OCI-LY7 (cell line): ENCODE measurements at regions of chr20 and their contacts with region 1.

Region 1: DNA sequence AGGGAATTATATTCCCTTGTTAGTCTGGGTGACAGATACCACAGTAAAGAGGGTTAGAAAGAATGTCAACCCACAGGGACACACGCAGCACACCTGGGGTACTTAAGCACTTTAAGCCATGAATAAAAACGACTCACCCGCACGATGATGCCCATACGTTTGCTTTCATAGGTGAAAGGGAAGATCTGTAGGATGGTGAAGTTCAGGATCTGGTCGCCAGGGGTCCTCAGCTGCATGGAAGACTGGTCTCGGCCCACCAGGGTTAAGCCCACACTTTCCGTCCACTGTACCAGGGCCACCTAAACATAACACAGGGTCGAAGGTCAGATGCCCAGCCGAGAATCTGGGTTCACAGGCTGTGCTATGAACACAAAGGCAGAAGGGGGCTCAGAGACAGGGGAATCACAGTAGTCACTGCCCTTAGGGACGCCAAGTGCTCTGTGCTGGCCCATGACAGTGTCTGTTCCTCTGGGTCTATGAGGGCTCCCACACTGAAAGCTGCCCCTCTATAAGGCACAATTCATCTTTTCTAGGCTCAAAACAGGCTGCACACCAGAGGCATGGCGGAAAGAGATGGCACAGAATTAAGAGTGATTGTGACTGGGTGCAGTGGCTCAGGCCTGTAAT is 96.8 kb upstream of the NFATC2 start:
- DNase-seq: peak; percentile 79
- H3K4me3 ChIP-seq: no peak overlapping the region
- H3K27ac ChIP-seq: no peak overlapping the region
- H3K4me1 ChIP-seq: peaks cover 7% of the 10 kb centered on the region
- CTCF ChIP-seq: peak; percentile 92

Region 2: GRCh38 chr20:51695574-51696303 is 56.4 kb after region 1 on chr20:
- CTCF ChIA-PET with region 1: no interaction called
- POLR2A ChIA-PET with region 1: no interaction called
- intact Hi-C with region 1: loop called (anchors 2 kb)
- DNase-seq: no peak
- H3K4me3 ChIP-seq: peak overlapping the region; percentile 53
- H3K27ac ChIP-seq: peak overlapping the region; percentile 1
- H3K4me1 ChIP-seq: peaks cover 30% of the 10 kb centered on the region
- CTCF ChIP-seq: no peak

Region 3: DNA sequence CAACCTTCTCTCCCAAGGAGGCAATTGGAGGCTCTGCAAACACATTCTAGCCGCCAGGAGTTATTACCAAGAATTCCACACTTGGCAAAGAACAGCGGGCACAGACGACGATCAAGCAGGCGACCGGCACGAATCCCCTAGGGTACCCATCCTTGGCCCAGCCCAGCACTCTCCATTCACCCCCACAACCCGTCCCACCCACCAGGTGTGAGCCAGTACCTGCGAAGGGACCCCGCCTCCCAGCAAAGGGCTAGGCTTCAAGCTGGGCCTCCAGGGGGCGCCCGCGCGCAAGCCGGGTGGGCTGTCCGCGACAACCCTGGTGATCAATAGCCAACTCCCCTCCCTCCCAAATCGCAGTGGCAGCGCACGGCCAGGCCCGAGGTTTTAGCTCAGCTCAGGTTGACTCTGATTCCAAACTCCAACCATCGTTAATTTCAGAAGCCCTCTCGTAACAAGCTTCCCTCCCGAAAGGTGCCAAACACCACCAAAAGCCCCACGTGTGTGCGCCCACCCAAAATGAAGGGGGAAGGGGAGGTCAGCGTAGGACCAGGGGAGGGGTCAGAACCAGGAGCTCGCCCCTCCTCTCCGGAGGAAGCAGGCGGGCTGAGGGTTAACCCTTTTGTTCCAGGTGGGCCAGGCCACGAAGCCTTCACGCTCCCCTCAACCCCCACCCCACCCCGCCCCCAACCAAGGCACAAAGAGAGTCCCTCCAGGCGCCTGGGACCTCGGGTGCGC is 160.9 kb after region 1 on chr20:
- CTCF ChIA-PET with region 1: no interaction called
- POLR2A ChIA-PET with region 1: interaction called, 3 read pairs
- intact Hi-C with region 1: loop called (anchors 2 kb)
- DNase-seq: peak; percentile 45
- H3K4me3 ChIP-seq: no peak overlapping the region
- H3K27ac ChIP-seq: no peak overlapping the region
- H3K4me1 ChIP-seq: no peaks in the 10 kb centered on the region
- CTCF ChIP-seq: peak; percentile 94

Region 4: DNA sequence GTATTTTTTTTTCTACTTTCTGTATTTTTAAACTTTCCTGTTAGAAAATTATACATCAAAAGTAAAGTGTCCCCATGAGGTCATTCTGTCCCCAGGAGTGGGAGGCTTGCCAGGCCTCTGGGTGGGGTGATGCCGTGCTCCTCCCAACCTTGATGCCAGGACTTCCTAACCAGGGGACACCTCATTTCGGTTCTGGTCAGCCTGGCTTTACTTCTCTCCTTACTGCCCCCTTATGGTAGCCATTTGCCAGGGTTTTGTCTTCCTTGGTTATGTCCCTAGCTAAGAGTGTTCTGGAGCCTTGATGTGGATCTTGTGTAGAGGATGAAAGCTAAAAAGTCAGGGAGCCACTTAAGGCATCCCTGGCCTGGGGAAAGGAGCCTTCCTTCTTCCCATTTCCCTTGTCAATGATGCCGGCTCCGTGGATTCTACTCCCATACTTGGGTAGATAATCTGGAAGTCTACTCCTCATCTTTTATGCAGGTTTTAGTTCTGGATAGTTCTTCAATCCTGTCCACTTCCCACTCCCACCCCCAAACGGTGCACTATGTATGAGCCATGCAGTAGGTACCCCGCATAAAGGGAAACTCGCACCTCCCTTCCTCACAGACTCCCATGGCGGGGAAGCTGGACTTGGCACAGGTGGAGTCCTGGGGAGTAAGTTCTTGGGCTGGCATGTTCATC is 327.1 kb after region 1 on chr20:
- CTCF ChIA-PET with region 1: no interaction called
- POLR2A ChIA-PET with region 1: no interaction called
- intact Hi-C with region 1: loop called (anchors 1 kb)
- DNase-seq: peak; percentile 55
- H3K4me3 ChIP-seq: no peak overlapping the region
- H3K27ac ChIP-seq: no peak overlapping the region
- H3K4me1 ChIP-seq: no peaks in the 10 kb centered on the region
- CTCF ChIP-seq: peak; percentile 75

Region 5: GRCh38 chr20:52083627-52084232 is 444.4 kb after region 1 on chr20:
- CTCF ChIA-PET with region 1: no interaction called
- POLR2A ChIA-PET with region 1: no interaction called
- intact Hi-C with region 1: loop called (anchors 1 kb)
- DNase-seq: peak; percentile 64
- H3K4me3 ChIP-seq: no peak overlapping the region
- H3K27ac ChIP-seq: no peak overlapping the region
- H3K4me1 ChIP-seq: no peaks in the 10 kb centered on the region
- CTCF ChIP-seq: peak; percentile 88

Region 6: DNA sequence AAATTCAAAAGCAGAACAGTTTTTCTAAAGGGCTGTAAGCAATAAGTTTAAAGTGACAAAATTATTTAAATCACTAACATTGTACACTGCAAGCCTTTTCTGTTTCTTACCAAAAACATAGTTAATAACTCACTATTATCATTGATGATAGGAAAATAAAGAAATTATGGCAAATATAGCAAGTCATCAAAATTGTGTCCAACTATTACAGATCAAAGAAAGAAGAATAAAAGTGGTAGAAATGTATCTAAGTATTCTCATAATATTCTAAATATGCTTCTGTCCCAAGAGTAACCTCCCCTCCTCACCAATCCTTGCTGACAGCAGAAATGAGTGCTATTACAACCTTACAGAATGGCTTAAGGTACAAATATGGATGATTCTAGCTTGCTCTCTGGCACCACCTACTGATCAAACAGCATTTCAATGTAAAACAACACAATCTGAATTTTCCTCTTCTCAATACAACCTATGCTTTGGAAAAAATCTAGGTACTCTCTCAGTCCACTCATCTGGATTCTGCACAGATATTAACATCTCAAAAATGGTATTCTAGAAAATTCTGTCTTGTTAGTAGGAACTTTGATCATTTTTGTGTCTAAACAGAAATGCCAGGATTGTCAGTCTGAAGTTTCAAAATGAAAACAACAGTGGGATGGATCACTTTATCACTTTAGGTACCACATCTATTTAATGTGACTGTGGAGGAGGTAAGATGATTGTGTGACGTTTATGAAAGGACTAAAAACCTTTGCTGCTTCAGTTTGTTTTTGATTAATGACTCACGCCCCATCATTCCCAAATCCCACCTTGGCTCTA is 511.3 kb after region 1 on chr20:
- CTCF ChIA-PET with region 1: no interaction called
- POLR2A ChIA-PET with region 1: no interaction called
- intact Hi-C with region 1: loop called (anchors 5 kb)
- DNase-seq: peak; percentile 51
- H3K4me3 ChIP-seq: no peak overlapping the region
- H3K27ac ChIP-seq: no peak overlapping the region
- H3K4me1 ChIP-seq: no peaks in the 10 kb centered on the region
- CTCF ChIP-seq: peak; percentile 94